ENCODE measurements at regions of chr4 and their contacts with region 1.

Region 1: GRCh38 chr4:19614171-19614570 is 637.5 kb upstream of the SLIT2 start:
- DNase-seq: no peak
- ATAC-seq: no peak
- H3K4me3 ChIP-seq: no peak overlapping the region
- H3K27ac ChIP-seq: no peak overlapping the region
- H3K4me1 ChIP-seq: no peaks in the 10 kb centered on the region
- H3K27me3 ChIP-seq: no peaks in the 10 kb centered on the region
- CTCF ChIP-seq: no peak

Region 2: DNA sequence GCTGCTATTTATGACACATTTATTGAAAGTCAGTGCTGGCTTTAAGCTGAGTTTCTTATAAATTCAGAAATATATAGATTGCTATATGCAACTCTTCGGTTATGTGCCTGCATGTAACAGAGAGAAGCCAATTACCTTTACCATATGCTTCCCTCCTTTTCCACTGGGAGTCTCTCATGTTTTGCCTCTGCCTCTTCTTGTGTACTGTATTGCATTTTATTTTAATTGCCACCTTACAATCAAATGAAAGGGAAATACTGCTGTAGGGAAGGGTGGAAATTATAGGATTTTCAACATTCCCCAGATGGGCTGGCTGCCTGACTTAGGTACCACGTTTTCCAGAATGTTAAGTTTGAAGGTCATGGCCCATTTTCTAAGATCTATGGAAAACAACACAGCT is 17.8 kb before region 1 on chr4:
- intact Hi-C with region 1: loop called in 1 of 10 experiments (anchors 1 kb)
- DNase-seq: no peak
- ATAC-seq: no peak
- H3K4me3 ChIP-seq: no peak overlapping the region
- H3K27ac ChIP-seq: no peak overlapping the region
- H3K4me1 ChIP-seq: no peaks in the 10 kb centered on the region
- H3K27me3 ChIP-seq: no peaks in the 10 kb centered on the region
- CTCF ChIP-seq: no peak

Region 3: GRCh38 chr4:19971829-19972228 is 357.7 kb after region 1 on chr4:
- intact Hi-C with region 1: no loop called
- DNase-seq: no peak
- ATAC-seq: no peak
- H3K4me3 ChIP-seq: no peak overlapping the region
- H3K27ac ChIP-seq: no peak overlapping the region
- H3K4me1 ChIP-seq: no peaks in the 10 kb centered on the region
- H3K27me3 ChIP-seq: no peaks in the 10 kb centered on the region
- CTCF ChIP-seq: no peak

Measured in heart right ventricle (tissue), 16 donors.